Activated CD8-positive, alpha-beta T cell treated with anti-CD3 and anti-CD28 coated beads for 36 hours (primary cell): ENCODE measurements at regions of chr11 and their contacts with region 1.

Region 1: DNA sequence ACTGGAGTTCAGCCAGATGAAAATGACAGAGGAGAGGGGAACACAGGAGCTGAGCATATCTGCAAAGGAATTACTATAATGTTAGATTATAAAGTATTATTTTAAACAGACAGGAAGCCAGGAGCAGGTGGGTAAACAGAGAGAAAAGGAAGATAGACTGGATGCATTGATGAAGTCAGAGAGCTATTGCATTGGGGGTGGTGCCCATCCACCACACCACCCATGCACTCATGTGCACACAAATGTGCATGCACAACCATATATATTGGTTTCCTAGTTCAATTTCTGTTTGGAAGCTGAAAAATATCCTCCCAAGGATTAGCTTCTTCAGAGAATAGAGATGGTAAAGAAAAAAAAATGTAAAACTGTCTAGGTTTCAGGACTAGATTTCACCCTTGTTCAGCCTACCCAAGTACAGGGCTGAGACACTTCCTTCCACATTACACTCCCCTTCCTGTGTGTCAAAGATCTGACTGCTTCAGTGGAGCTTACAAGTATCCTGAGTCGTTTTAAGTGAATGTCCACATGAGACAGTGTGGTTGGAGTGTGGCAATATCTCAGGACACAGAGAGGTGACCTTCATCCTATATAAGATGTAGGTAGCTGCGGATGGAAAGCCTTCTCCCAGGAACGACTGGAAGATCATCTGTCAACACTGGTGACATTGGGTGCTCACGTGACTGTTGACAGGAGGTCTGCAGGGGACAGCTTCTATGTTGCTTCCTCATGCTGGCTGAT is 12.2 kb upstream of the SMPD1 start:
- DNase-seq: no peak
- ATAC-seq: peak; percentile 70
- H3K4me3 Mint-ChIP-seq: no peak overlapping the region
- H3K27ac Mint-ChIP-seq: peak overlapping the region; percentile 69
- H3K4me1 Mint-ChIP-seq: peaks cover 24% of the 10 kb centered on the region
- H3K27me3 Mint-ChIP-seq: no peaks in the 10 kb centered on the region
- CTCF ChIP-seq: no peak

Region 2: GRCh38 chr11:6362873-6363678 is 15.0 kb before region 1 on chr11:
- CTCF ChIA-PET with region 1: interaction called, 119 read pairs
- POLR2A ChIA-PET with region 1: interaction called, 5 read pairs
- intact Hi-C with region 1: no loop called
- DNase-seq: peak; percentile 85
- ATAC-seq: peak; percentile 98
- H3K4me3 Mint-ChIP-seq: no peak overlapping the region
- H3K27ac Mint-ChIP-seq: no peak overlapping the region
- H3K4me1 Mint-ChIP-seq: no peaks in the 10 kb centered on the region
- H3K27me3 Mint-ChIP-seq: no peaks in the 10 kb centered on the region
- CTCF ChIP-seq: peak; percentile 74

Region 3: DNA sequence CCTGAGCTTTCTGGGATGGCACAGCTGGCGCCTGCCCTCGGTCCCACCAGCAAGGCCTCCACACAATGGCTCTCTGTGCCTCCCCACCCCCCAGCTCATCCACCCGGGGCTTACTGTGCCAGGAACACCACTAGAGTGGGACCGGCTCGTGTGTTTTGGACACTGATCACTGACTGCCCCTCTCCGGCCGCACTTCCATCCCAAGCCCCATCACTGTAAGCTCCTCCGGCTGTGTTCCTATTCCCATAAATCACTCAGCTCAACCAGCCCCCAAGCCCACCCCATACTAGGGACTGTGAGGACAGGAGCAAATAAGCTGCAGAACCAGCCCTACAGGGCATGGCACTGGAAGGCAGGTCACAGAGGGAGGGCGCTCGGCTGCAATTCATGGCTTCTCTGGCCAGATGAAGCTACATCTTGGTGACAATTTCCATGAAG is 33.5 kb after region 1 on chr11:
- CTCF ChIA-PET with region 1: interaction called, 13 read pairs
- POLR2A ChIA-PET with region 1: interaction called, 3 read pairs
- intact Hi-C with region 1: no loop called
- DNase-seq: no peak
- ATAC-seq: no peak
- H3K4me3 Mint-ChIP-seq: no peak overlapping the region
- H3K27ac Mint-ChIP-seq: no peak overlapping the region
- H3K4me1 Mint-ChIP-seq: peaks cover 41% of the 10 kb centered on the region
- H3K27me3 Mint-ChIP-seq: no peaks in the 10 kb centered on the region
- CTCF ChIP-seq: no peak

Region 4: DNA sequence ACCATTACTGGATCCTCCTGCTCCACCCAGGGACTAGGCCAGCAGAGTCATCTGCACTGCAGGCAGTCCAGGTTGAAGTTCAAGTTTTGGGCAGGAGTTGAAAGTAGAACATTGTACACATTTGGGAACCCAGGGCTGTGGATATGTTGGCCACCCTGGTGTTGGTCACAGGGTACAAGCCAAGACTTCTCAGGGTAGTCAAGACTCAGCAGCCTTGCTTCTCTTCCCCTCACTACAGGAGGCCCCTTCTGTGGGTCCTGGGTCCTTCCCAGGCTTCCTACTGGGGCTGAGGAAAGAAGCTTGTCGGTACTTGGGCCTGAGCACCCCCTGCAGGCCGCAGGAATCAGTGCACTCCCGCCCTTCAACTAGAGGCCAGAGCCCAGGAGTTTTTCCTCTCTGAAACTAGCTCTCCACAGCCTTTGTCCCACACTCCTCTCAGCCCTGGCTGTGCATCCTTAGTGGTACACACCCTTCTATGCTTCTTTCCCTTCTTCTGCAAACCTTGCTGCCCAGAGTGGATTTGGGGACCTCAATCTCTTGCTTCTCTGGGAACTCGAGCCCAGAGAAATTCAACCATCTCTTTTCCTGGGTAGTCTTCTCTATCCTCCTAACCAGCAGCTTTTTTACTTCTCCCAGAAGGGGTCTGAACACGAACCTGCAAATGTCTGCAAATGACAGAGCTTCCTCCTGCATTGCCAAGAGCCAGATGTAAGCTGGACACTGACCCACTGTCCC is 65.4 kb after region 1 on chr11:
- CTCF ChIA-PET with region 1: interaction called, 652 read pairs
- POLR2A ChIA-PET with region 1: interaction called, 4 read pairs
- intact Hi-C with region 1: loop called (anchors 1 kb)
- DNase-seq: peak; percentile 67
- ATAC-seq: peak; percentile 90
- H3K4me3 Mint-ChIP-seq: no peak overlapping the region
- H3K27ac Mint-ChIP-seq: no peak overlapping the region
- H3K4me1 Mint-ChIP-seq: no peaks in the 10 kb centered on the region
- H3K27me3 Mint-ChIP-seq: no peaks in the 10 kb centered on the region
- CTCF ChIP-seq: peak; percentile 96

Region 5: GRCh38 chr11:6481012-6481923 is 103.2 kb after region 1 on chr11 and contains the starts of genes ARFIP2 and TIMM10B:
- CTCF ChIA-PET with region 1: interaction called, 41 read pairs
- POLR2A ChIA-PET with region 1: interaction called, 5 read pairs
- intact Hi-C with region 1: no loop called
- DNase-seq: peak; percentile 99
- ATAC-seq: peak; percentile 98
- H3K4me3 Mint-ChIP-seq: peak within 1 kb of the TSS; percentile 87
- H3K27ac Mint-ChIP-seq: peak within 1 kb of the TSS; percentile 96
- H3K4me1 Mint-ChIP-seq: peaks cover 34% of the 10 kb centered on the region
- H3K27me3 Mint-ChIP-seq: no peaks in the 10 kb centered on the region
- CTCF ChIP-seq: no peak
- total RNA-seq, gene ARFIP2: 36.9 to 38.3 TPM
- total RNA-seq, gene TIMM10B: 40.6 to 43.0 TPM

Region 6: DNA sequence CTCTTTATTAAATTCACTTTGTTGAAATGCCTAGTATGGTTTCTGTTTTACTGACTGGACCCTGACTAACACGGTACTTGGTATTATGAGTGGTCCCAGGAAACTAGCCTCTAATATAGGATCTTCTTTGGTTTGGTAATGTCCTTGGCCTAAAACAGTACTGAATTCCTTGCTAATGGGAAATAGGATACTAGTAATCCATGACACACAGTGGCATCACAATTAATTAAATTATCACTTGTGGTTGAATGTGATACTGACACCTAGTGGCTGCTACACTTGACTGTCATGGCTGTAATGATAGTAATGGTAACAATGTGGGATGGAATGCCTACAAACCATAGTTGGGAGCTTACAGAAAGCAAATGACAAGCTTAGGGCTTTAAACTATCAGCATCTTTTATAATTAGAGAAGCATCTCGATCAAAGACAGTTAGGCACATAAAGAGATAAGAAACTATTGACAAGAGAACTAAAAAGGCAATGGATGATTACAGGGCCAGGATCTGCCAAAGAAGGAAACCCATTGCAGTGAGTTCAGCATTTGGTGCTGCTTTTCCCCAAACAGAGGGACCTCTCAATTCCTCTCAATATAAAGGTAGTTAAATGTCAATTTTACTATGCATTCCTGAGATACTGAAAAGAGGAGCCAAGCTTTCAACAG is 127.6 kb after region 1 on chr11:
- CTCF ChIA-PET with region 1: interaction called, 77 read pairs
- POLR2A ChIA-PET with region 1: interaction called, 4 read pairs
- intact Hi-C with region 1: loop called (anchors 5 kb)
- DNase-seq: peak; percentile 12
- ATAC-seq: peak; percentile 69
- H3K4me3 Mint-ChIP-seq: no peak overlapping the region
- H3K27ac Mint-ChIP-seq: no peak overlapping the region
- H3K4me1 Mint-ChIP-seq: peaks cover 4% of the 10 kb centered on the region
- H3K27me3 Mint-ChIP-seq: no peaks in the 10 kb centered on the region
- CTCF ChIP-seq: peak; percentile 57

Region 7: DNA sequence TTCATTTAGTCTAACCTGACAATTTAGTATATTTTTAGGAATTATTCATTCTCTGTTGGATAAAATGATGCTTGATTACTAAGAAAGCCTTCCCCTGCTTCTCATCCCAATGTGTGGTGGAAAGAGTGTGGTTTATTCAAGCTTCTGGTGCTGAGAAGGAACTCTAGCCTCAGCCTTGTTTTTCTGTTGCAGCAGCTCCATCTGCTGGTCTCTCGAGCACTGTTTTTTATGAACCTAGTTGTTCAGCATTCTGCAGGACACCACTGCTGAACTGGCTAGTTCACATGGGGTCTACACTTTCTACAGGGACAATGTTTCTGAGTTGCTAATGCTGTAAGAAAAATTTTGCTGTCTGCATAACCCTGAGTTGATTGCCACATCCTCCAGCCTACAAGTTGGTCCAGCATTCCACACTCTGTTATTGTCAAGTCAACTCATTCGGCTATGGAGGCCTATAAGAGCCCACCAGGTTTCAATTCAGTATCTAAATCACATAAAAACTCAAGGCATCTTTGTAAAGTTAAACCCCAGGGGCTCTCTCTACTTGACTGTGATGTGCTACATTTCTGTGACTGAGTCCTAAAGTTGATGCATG is 379.4 kb after region 1 on chr11:
- CTCF ChIA-PET with region 1: interaction called, 20 read pairs
- POLR2A ChIA-PET with region 1: no interaction called
- intact Hi-C with region 1: no loop called
- DNase-seq: peak; percentile 82
- ATAC-seq: peak; percentile 84
- H3K4me3 Mint-ChIP-seq: no peak overlapping the region
- H3K27ac Mint-ChIP-seq: no peak overlapping the region
- H3K4me1 Mint-ChIP-seq: peaks cover 13% of the 10 kb centered on the region
- H3K27me3 Mint-ChIP-seq: peaks cover 5% of the 10 kb centered on the region
- CTCF ChIP-seq: peak; percentile 84